PC-3 (cell line): ENCODE measurements at regions of chr14 and their contacts with region 1.

Region 1: DNA sequence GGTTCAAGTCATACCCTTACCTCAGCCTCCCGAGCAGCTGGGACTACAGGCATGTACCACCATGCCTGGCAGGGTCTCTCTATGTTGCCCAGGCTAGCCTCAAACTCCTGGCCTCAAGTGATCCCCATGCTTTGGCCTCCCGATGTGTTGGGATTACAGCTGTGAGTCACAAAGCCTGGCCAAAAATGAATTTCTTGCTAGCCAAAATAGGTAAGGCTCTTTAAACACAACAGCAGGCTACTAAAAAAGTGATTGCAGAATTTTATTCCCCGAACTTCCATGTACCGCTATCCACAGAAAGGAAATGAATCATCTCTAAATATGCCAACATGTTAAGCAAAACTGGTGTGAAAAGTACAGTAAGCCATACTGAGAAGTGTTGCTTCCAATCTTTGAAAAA is 50.6 kb downstream of the WDHD1 start:
- DNase-seq: peak; percentile 54
- ATAC-seq: peak; percentile 95
- H3K4me3 ChIP-seq: no peak overlapping the region
- H3K27ac ChIP-seq: no peak overlapping the region
- H3K4me1 ChIP-seq: peaks cover 4% of the 10 kb centered on the region; the same call in 1 of the 2 replicates
- H3K27me3 ChIP-seq: no peaks in the 10 kb centered on the region
- CTCF ChIP-seq: no peak

Region 2: GRCh38 chr14:54818201-54819133 is 157.8 kb before region 1 on chr14:
- CTCF ChIA-PET with region 1: no interaction called
- POLR2A ChIA-PET with region 1: no interaction called
- intact Hi-C with region 1: loop called (anchors 10 kb)
- DNase-seq: peak; percentile 85
- ATAC-seq: peak; percentile 92
- H3K4me3 ChIP-seq: peak overlapping the region; percentile 4; the same call in 1 of the 2 replicates
- H3K27ac ChIP-seq: no peak overlapping the region
- H3K4me1 ChIP-seq: peaks cover 8% of the 10 kb centered on the region; the same call in 1 of the 2 replicates
- H3K27me3 ChIP-seq: no peaks in the 10 kb centered on the region
- CTCF ChIP-seq: no peak

Region 3: DNA sequence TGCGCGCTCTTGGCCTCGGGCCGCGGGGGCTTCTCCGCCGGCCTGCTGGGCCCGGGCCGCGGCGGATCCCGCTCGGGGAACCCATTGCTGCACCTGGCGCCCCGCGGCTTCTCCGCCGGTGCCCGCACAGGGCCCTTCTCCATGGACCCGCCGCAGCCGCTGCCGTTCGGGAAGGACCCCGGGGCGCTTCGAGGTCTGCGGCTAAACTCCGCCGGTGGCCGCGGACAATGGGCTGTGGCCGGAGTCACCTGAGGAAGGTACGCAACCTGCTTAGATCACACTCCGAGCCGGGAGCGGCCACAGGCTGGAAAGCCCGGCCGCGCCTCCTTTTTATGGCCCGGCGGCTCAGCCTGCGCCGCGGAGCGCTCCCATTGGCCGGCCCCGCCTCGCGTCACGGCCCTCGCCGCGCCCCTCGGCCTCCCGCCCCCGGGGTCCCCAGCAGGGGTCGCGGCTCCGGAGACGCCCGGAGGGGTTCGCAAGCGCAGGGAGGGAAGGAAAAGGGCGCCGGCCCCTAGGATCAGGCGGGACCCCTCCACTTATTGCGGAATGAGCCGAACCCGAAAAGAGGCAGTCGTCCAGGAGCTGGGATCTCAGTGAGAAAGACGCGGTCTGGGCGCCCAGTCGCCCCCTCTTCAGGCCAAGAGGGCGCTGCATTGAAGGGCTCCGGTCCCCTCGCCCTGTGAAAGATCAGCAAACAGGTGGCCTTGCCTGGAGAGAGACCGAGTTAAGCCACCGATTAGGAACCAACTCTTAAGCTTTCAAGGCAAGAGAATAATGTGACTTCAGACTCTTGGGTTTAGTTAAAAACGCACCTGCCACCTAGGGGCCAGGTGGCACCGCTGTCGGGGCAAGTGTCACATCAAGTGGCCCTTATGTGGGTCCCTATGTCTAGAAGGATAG is 73.5 kb before region 1 on chr14 and contains the start of gene GCH1:
- CTCF ChIA-PET with region 1: no interaction called
- POLR2A ChIA-PET with region 1: no interaction called
- intact Hi-C with region 1: loop called (anchors 1 kb)
- DNase-seq: peak; percentile 92
- ATAC-seq: peak; percentile 87
- H3K4me3 ChIP-seq: peak within 1 kb of the TSS; percentile 86
- H3K27ac ChIP-seq: peak within 1 kb of the TSS; percentile 41
- H3K4me1 ChIP-seq: peaks cover 9% of the 10 kb centered on the region
- H3K27me3 ChIP-seq: no peaks in the 10 kb centered on the region
- CTCF ChIP-seq: peak; percentile 93
- total RNA-seq, gene GCH1: 26.6 and 26.9 TPM in 2 replicates

Region 4: GRCh38 chr14:55102141-55102621 is 125.9 kb after region 1 on chr14:
- CTCF ChIA-PET with region 1: no interaction called
- POLR2A ChIA-PET with region 1: no interaction called
- intact Hi-C with region 1: no loop called
- DNase-seq: peak; percentile 100
- ATAC-seq: peak; percentile 77
- H3K4me3 ChIP-seq: peak overlapping the region; percentile 51
- H3K27ac ChIP-seq: peak overlapping the region; percentile 89
- H3K4me1 ChIP-seq: peaks cover 49% of the 10 kb centered on the region
- H3K27me3 ChIP-seq: no peaks in the 10 kb centered on the region
- CTCF ChIP-seq: no peak